ENCODE measurements at regions of chr5 and their contacts with region 1.

Region 1: GRCh38 chr5:55936100-55936693 is 58.6 kb downstream of the IL6ST start:
- DNase-seq: peak; percentile 82
- H3K4me3 Mint-ChIP-seq: no peak overlapping the region
- H3K27ac Mint-ChIP-seq: no peak overlapping the region
- H3K4me1 Mint-ChIP-seq: peaks cover 6% of the 10 kb centered on the region
- H3K27me3 Mint-ChIP-seq: no peaks in the 10 kb centered on the region

Region 2: GRCh38 chr5:55959208-55959607 is 23.0 kb after region 1 on chr5:
- CTCF ChIA-PET with region 1: interaction called, 15 read pairs
- POLR2A ChIA-PET with region 1: no interaction called
- DNase-seq: no peak
- H3K4me3 Mint-ChIP-seq: no peak overlapping the region
- H3K27ac Mint-ChIP-seq: no peak overlapping the region
- H3K4me1 Mint-ChIP-seq: peaks cover 6% of the 10 kb centered on the region
- H3K27me3 Mint-ChIP-seq: no peaks in the 10 kb centered on the region

Region 3: DNA sequence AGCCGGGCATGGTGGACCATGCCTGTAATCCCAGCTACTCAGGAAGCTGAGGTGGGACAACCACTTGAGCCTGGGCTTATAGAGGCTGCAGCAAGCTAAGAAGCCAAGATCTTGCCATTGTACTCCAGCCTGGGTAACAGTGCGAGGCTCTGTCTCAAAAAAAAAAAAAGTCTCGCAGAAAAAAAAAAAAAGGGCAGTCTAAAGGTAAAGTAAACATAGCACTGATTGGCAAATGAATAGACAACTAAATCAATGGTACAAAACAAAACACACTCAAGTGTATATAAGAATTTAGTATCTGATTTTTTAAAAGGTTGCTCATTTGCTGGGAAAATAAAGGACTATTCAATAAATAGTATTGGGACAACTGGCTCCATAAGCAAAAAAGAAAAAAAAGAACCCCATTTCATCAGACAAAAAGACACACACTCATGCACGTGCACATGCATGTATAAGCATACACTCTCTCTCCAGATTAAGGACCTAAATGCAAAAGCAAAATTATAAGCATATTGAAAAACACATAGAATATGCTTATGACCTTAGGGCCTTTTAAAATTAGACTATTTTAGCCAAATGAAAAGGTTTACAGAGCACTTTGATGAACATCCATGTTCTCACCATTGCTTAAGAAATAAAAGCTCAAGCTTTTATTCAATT is 52.9 kb after region 1 on chr5:
- CTCF ChIA-PET with region 1: interaction called, 13 read pairs
- POLR2A ChIA-PET with region 1: no interaction called
- DNase-seq: no peak
- H3K4me3 Mint-ChIP-seq: no peak overlapping the region
- H3K27ac Mint-ChIP-seq: no peak overlapping the region
- H3K4me1 Mint-ChIP-seq: peaks cover 70% of the 10 kb centered on the region
- H3K27me3 Mint-ChIP-seq: no peaks in the 10 kb centered on the region

Region 4: DNA sequence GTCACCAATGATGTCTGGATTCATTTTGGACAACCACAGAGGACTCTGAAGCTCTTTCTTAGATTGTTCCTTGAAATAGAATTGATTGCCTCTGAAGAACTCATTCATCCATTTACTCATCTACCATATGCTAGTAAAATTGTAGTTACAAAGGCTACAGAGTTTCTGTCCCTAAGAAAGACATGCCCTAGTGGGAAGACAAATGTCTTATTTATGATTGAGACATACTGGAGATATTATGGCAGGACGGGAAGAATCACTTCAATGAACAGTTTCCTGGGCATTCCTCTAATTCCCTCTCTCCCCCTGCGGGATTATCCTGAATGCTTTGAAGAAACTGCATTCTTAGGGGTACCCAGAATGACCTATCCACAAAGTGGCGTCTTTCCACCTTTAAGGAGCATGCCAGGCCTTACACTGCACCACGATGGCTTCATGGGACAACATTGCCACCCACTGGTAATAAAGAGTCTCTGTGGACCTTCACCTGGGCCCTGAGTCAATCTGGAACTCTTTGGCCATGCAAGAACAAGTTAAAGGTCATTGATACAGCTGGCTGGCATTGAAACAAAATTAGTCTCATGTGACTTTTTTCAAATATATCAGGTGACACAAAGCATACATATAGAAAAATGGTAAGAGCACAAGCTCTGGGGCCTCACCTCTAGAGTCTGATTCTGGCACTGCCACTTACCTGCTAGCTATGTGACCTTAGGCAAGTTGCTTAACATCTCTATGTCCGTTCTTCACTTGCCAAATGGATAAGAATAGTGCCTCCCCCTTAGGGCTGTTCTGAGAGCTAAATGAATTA is 264.9 kb after region 1 on chr5:
- CTCF ChIA-PET with region 1: interaction called, 96 read pairs
- POLR2A ChIA-PET with region 1: interaction called, 3 read pairs
- DNase-seq: peak; percentile 63
- H3K4me3 Mint-ChIP-seq: no peak overlapping the region
- H3K27ac Mint-ChIP-seq: no peak overlapping the region
- H3K4me1 Mint-ChIP-seq: peaks cover 12% of the 10 kb centered on the region
- H3K27me3 Mint-ChIP-seq: peaks cover 1% of the 10 kb centered on the region